Cardiac septum (tissue), 1 donor: ENCODE measurements at regions of chr5 and their contacts with region 1.

Region 1: GRCh38 chr5:107542428-107542827 is 128.3 kb downstream of the EFNA5 start:
- DNase-seq: no peak

Region 2: GRCh38 chr5:107389130-107389774 is 153.2 kb before region 1 on chr5:
- intact Hi-C with region 1: loop called (anchors 10 kb)
- DNase-seq: no peak

Region 3: DNA sequence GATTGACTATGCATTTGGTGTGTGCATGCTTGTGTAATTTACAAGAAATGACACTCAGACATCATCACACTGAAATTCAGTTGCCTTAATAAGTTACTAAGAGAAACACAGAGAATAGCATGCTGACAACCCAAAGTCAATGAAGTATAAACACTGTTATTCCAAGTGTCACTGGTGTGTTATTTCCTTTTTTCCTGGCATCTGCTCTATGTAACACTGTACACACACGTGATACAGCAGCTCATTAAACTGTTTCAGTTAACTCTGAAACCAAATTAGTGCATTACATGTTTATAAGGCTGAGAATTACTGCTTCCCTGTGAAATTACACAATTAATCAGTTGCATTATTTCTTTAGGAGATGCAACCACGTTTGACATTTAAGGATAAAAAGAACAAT is 124.4 kb before region 1 on chr5:
- intact Hi-C with region 1: loop called (anchors 10 kb)
- DNase-seq: no peak

Region 4: DNA sequence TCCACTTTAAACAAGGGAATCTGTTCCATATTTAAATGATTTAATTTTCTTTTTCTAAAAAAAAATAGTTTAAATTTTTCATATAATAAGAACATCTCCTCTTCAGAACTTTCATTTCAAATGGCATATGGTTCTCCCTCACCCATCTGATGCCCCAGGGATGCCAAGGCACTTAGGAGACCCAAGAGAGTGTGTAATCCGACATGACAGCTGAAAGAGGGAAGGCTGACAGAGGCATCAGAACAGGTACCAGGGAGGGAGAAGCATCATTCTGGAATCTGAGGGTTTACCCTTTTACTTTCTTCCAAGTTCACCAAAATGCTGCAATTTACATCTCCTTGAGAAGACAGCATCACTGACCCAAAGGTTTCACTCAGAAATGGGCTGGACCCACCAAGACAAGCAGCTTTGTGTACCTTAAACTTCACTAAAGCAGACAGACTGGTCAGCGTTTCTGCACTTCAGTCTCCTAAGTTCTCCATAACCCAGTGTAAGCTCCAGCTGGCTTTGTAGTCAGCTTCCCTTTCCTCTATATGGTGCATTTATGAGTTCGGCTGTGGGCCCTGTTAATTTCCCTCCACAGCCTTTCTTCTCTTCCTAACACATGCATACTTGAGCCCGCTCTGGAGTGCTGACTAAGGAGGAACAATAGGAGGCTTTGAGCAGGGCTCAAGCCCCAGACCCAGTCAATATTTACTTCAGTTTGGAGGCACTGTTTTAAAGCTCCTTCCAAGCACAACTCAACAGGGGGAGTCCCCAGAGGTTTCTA is 110.6 kb after region 1 on chr5:
- intact Hi-C with region 1: no loop called
- DNase-seq: no peak